Natural killer cell (primary cell): ENCODE measurements at regions of chr11 and their contacts with region 1.

Region 1: GRCh38 chr11:134207538-134208239 is 16.1 kb downstream of the NCAPD3 start:
- DNase-seq: peak; percentile 60 to 78
- ATAC-seq: peak in 1 of 3 donors; percentile 29
- H3K4me3 ChIP-seq: no peak overlapping the region
- H3K4me3 Mint-ChIP-seq: no peak overlapping the region
- H3K27ac ChIP-seq: no peak overlapping the region
- H3K27ac Mint-ChIP-seq: no peak overlapping the region
- H3K4me1 ChIP-seq: no peaks in the 10 kb centered on the region
- H3K4me1 Mint-ChIP-seq: no peaks in the 10 kb centered on the region
- H3K27me3 ChIP-seq: no peaks in the 10 kb centered on the region
- H3K27me3 Mint-ChIP-seq: no peaks in the 10 kb centered on the region
- CTCF ChIP-seq: peak; percentile 82

Region 2: GRCh38 chr11:134068829-134069425 is 138.8 kb before region 1 on chr11 and contains the start of gene JAM3:
- intact Hi-C with region 1: no loop called
- DNase-seq: peak; percentile 86 to 98
- ATAC-seq: peak; percentile 89 to 96 (median 95)
- H3K4me3 ChIP-seq: peak within 1 kb of the TSS; percentile 29
- H3K4me3 Mint-ChIP-seq: peak within 1 kb of the TSS; percentile 92
- H3K27ac ChIP-seq: no peak within 1 kb of the TSS
- H3K27ac Mint-ChIP-seq: peak within 1 kb of the TSS; percentile 37 to 89
- H3K4me1 ChIP-seq: peaks cover 4% of the 10 kb centered on the region
- H3K4me1 Mint-ChIP-seq: peaks cover 8% of the 10 kb centered on the region in 2 donors
- H3K27me3 ChIP-seq: peaks cover 3% of the 10 kb centered on the region
- H3K27me3 Mint-ChIP-seq: peaks cover 28 to 30% of the 10 kb centered on the region in 2 donors
- CTCF ChIP-seq: no peak
- total RNA-seq, gene JAM3: 2.1 to 3.8 (median 2.4) TPM

Region 3: GRCh38 chr11:134244655-134245054 is 37.0 kb after region 1 on chr11:
- intact Hi-C with region 1: loop called (anchors 1 kb)
- DNase-seq: peak in 1 of 2 donors; percentile 60
- ATAC-seq: peak; percentile 47 to 77 (median 72)
- H3K4me3 ChIP-seq: no peak overlapping the region
- H3K4me3 Mint-ChIP-seq: no peak overlapping the region
- H3K27ac ChIP-seq: no peak overlapping the region
- H3K27ac Mint-ChIP-seq: no peak overlapping the region
- H3K4me1 ChIP-seq: no peaks in the 10 kb centered on the region
- H3K4me1 Mint-ChIP-seq: peaks cover 5 to 9% of the 10 kb centered on the region in 2 donors
- H3K27me3 ChIP-seq: no peaks in the 10 kb centered on the region
- H3K27me3 Mint-ChIP-seq: no peaks in the 10 kb centered on the region
- CTCF ChIP-seq: peak; percentile 63

Region 4: GRCh38 chr11:134253188-134253993 is 45.7 kb after region 1 on chr11 and contains the starts of genes ACAD8 and THYN1:
- intact Hi-C with region 1: loop called (anchors 1 kb)
- DNase-seq: peak; percentile 88 to 98
- ATAC-seq: peak; percentile 99 to 100 (median 100)
- H3K4me3 ChIP-seq: peak within 1 kb of the TSS; percentile 74
- H3K4me3 Mint-ChIP-seq: peak within 1 kb of the TSS; percentile 98
- H3K27ac ChIP-seq: peak within 1 kb of the TSS; percentile 50
- H3K27ac Mint-ChIP-seq: peak within 1 kb of the TSS; percentile 75 to 79
- H3K4me1 ChIP-seq: peaks cover 15% of the 10 kb centered on the region
- H3K4me1 Mint-ChIP-seq: peaks cover 19 to 47% of the 10 kb centered on the region in 2 donors
- H3K27me3 ChIP-seq: no peaks in the 10 kb centered on the region
- H3K27me3 Mint-ChIP-seq: no peaks in the 10 kb centered on the region
- CTCF ChIP-seq: no peak
- total RNA-seq, gene ACAD8: 24.3 to 42.5 (median 39.3) TPM
- total RNA-seq, gene THYN1: 21.6 to 25.4 (median 24.0) TPM